PC-3 (cell line): ENCODE measurements at regions of chr6 and their contacts with region 1.

Region 1: DNA sequence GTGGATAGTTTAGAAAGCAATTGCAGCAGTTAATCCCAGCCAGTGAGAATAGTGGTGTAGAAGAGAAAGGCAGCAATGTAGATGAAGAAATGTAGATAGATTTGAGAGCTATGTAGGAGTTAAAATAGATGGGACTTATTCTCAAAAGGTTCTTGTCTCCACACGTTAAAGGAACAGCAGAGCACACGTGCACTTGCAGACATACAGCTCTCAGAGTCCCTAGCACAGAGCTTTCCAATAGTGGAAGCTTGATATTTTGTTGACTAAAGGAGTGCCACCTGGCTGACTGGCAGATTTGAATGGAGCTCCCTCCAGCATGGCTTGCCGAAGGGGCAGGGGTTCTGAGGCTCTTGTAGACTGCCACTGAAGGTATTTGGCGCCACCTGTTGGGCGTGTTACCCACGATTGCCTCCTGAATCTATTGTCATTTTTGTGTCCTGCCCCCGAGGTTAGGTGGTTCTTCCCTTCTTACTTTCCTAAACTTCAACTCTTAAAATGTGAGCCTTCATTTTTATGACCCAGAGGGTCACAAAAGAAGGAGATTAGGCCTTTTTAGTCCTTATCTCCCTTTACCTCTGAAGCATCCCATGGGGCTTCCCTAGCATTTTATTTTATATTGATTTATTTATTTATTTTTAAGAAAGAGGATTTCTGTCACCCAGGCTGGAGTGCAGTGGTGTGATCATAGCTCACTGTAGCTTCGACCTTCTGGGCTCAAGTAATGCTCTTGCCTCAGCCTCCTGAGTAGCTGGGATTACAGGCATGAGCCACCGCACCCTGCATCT is 16.4 kb downstream of the BRD2 start:
- DNase-seq: peak; percentile 95
- ATAC-seq: peak; percentile 95
- H3K4me3 ChIP-seq: no peak overlapping the region
- H3K27ac ChIP-seq: no peak overlapping the region
- H3K4me1 ChIP-seq: peaks cover 8% of the 10 kb centered on the region; the same call in 1 of the 2 replicates
- H3K27me3 ChIP-seq: no peaks in the 10 kb centered on the region
- CTCF ChIP-seq: peak; percentile 94

Region 2: GRCh38 chr6:32807020-32807580 is 177.7 kb before region 1 on chr6:
- CTCF ChIA-PET with region 1: no interaction called
- POLR2A ChIA-PET with region 1: no interaction called
- intact Hi-C with region 1: no loop called
- DNase-seq: no peak
- ATAC-seq: no peak
- H3K4me3 ChIP-seq: no peak overlapping the region
- H3K27ac ChIP-seq: no peak overlapping the region
- H3K4me1 ChIP-seq: no peaks in the 10 kb centered on the region; the same call in 1 of the 2 replicates
- H3K27me3 ChIP-seq: peaks cover 32% of the 10 kb centered on the region
- CTCF ChIP-seq: no peak

Region 3: GRCh38 chr6:32952817-32953739 is 31.7 kb before region 1 on chr6 and contains the start of gene HLA-DMA:
- CTCF ChIA-PET with region 1: interaction called, 40 read pairs
- POLR2A ChIA-PET with region 1: interaction called, 6 read pairs
- intact Hi-C with region 1: no loop called
- DNase-seq: peak; percentile 96
- ATAC-seq: peak; percentile 97
- H3K4me3 ChIP-seq: no peak within 1 kb of the TSS
- H3K27ac ChIP-seq: no peak within 1 kb of the TSS
- H3K4me1 ChIP-seq: no peaks in the 10 kb centered on the region; the same call in 1 of the 2 replicates
- H3K27me3 ChIP-seq: no peaks in the 10 kb centered on the region
- CTCF ChIP-seq: peak; percentile 79
- total RNA-seq, gene HLA-DMA: 1.7 and 3.0 TPM in 2 replicates